ENCODE measurements at regions of chr11 and their contacts with region 1.

Region 1: GRCh38 chr11:56624661-56625110 is 10.0 kb upstream of the OR5M1 start:
- DNase-seq: no peak
- ATAC-seq: peak; percentile 41
- H3K4me3 ChIP-seq: no peak overlapping the region
- H3K27ac ChIP-seq: no peak overlapping the region
- H3K4me1 ChIP-seq: no peaks in the 10 kb centered on the region
- H3K27me3 ChIP-seq: no peaks in the 10 kb centered on the region

Region 2: GRCh38 chr11:56783448-56784041 is 158.9 kb after region 1 on chr11:
- intact Hi-C with region 1: loop called (anchors 2 to 5 kb)
- DNase-seq: no peak
- ATAC-seq: no peak
- H3K4me3 ChIP-seq: no peak overlapping the region
- H3K27ac ChIP-seq: no peak overlapping the region
- H3K4me1 ChIP-seq: no peaks in the 10 kb centered on the region
- H3K27me3 ChIP-seq: no peaks in the 10 kb centered on the region